H1 (cell line): ENCODE measurements at regions of chr14 and their contacts with region 1.

Region 1: DNA sequence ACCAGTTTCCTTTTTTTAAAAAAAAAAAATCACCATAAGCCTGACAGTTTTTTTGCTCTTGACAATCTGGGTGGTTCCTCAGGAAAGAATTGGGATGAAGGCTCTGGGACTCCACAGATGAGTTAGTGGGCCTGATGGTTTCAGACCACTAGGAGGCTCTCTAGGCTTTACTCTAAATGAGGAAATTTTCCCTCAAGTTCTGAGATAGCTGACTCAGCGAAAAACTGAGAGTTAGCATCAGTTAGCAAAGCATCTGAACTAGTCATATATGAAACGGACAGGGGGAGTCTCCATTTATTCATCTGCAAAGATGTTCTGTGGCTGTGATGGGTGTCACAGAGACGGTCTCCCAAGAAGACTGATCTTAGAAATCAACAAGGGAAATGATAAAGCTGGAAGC is 314.3 kb upstream of the OR4E1 start:
- DNase-seq: no peak
- H3K4me3 ChIP-seq: no peak overlapping the region
- H3K27ac ChIP-seq: no peak overlapping the region
- H3K4me1 ChIP-seq: no peaks in the 10 kb centered on the region
- H3K27me3 ChIP-seq: peaks cover 0 to 1% (median 0%) of the 10 kb centered on the region in 4 experiments; a peak in 1 of 7 replicates
- CTCF ChIP-seq: peak in 2 of 3 experiments; percentile 62 to 78; a peak in 3 of 4 replicates
- EP300 ChIP-seq: no peak
- POLR2A ChIP-seq: no peak
- RAD21 ChIP-seq: peak; percentile 38 to 55

Region 2: DNA sequence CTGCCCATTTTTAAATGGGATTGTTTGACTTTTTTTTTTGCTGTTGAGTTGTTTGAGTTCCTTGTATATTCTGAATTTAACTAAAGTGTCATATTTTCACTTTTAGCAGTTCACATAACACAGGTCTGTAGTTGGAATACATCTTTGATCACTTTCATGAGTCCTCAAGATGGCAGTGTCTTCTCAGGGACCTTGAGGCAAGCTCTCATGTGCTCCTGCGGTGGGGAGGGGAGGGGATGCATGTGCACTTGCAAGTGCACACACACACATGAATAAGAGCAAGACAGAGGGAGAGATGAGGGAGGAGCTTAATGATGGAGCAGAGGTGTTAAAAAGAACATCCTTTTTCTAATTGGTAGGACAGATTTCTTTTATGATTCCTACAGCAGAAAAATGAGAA is 22.9 kb before region 1 on chr14:
- CTCF ChIA-PET with region 1: interaction called, 11 read pairs
- POLR2A ChIA-PET with region 1: no interaction called
- DNase-seq: no peak
- H3K4me3 ChIP-seq: no peak overlapping the region
- H3K27ac ChIP-seq: no peak overlapping the region
- H3K4me1 ChIP-seq: no peaks in the 10 kb centered on the region
- H3K27me3 ChIP-seq: no peaks in the 10 kb centered on the region
- CTCF ChIP-seq: no peak
- EP300 ChIP-seq: no peak
- POLR2A ChIP-seq: no peak
- RAD21 ChIP-seq: no peak

Region 3: GRCh38 chr14:22010545-22011252 is 22.8 kb after region 1 on chr14:
- CTCF ChIA-PET with region 1: interaction called, 12 read pairs
- POLR2A ChIA-PET with region 1: no interaction called
- DNase-seq: no peak
- H3K4me3 ChIP-seq: no peak overlapping the region
- H3K27ac ChIP-seq: no peak overlapping the region
- H3K4me1 ChIP-seq: no peaks in the 10 kb centered on the region
- H3K27me3 ChIP-seq: no peaks in the 10 kb centered on the region
- CTCF ChIP-seq: no peak
- EP300 ChIP-seq: no peak
- POLR2A ChIP-seq: no peak
- RAD21 ChIP-seq: no peak

Region 4: GRCh38 chr14:22026527-22026926 is 38.6 kb after region 1 on chr14:
- CTCF ChIA-PET with region 1: interaction called, 13 read pairs
- POLR2A ChIA-PET with region 1: no interaction called
- DNase-seq: no peak
- H3K4me3 ChIP-seq: no peak overlapping the region
- H3K27ac ChIP-seq: no peak overlapping the region
- H3K4me1 ChIP-seq: no peaks in the 10 kb centered on the region
- H3K27me3 ChIP-seq: no peaks in the 10 kb centered on the region
- CTCF ChIP-seq: no peak
- EP300 ChIP-seq: no peak
- POLR2A ChIP-seq: no peak
- RAD21 ChIP-seq: no peak